ENCODE measurements at regions of chr10 and their contacts with region 1.

Region 1: DNA sequence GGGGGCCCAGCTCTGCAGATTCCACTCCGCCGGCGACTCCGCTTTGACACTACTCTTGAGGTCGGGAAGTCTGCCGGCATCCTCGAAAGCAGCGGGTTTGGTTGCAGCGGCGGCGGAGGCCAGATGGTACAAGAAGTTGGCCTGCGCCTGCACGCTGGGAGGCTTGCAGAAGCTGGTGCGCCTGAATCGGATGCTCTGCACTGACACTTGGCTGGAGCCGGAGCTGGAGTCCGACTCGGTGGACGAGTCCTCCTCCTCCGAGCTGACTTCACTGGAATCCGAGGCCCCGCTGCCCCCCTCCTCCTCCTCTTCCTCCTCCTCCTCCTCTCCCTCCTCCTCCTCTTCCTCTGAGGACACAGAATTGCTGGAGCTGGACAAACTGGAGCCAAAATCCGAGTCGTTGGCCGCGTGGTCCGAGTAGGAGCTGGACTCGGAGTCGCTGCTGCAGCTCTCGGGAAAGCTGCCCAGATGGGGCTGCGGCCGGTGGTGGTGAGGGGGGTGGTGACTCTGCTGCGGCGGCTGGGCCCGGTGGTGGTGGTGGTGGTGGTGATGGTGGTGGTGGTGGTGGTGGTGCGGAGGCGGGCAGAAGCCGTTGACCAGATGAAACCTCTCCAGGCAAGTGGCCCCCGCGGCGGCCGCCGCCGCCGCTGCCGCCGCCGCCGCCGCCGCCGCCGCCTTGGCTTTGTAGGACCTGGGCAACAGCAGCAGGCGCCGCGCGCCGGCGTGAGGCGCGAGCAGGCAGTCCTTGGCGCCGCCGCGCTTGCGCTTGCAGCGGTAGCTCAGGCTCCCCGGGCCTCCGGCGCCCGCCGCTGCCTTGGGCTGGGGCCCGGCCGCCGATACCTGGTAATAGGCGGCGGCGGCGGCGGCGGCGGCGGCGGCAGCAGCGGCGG is 9.0 kb downstream of the SKIDA1 start:
- DNase-seq: peak in 1 of 2 donors; percentile 89
- H3K4me3 ChIP-seq: peak overlapping the region; percentile 57 to 76
- H3K27ac ChIP-seq: peak overlapping the region; percentile 91
- H3K4me1 ChIP-seq: peaks cover 38% of the 10 kb centered on the region
- H3K27me3 ChIP-seq: no peaks in the 10 kb centered on the region
- CTCF ChIP-seq: no peak
- POLR2A ChIP-seq: no peak

Region 2: DNA sequence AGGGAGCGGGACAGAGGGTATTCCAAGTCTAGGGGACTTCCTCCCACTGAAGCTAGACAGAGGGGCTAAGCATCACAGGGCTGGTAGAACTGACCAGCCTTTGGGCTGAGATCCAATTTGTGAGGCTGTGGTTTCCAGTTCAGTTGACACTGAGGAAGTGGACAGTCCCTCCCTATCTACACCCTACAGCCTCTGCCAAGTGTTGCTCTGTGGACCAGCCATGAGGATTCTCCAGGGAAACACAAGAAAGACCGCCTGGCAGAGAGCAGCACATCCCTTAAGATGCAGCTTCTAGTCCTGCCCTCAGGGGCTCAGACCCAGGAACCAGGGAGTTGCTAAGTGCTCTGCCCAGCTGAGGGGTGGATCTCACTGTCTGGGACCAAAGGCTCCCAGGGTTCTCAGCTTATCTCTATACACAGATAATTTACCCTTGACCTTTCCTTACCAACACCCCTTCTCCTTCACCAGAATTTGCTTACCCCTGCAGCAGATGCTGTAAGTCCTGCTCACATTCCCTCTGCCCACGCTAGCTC is 243.0 kb before region 1 on chr10:
- intact Hi-C with region 1: no loop called
- DNase-seq: no peak
- H3K4me3 ChIP-seq: no peak overlapping the region
- H3K27ac ChIP-seq: no peak overlapping the region
- H3K4me1 ChIP-seq: no peaks in the 10 kb centered on the region
- H3K27me3 ChIP-seq: no peaks in the 10 kb centered on the region
- CTCF ChIP-seq: no peak
- POLR2A ChIP-seq: no peak

Region 3: DNA sequence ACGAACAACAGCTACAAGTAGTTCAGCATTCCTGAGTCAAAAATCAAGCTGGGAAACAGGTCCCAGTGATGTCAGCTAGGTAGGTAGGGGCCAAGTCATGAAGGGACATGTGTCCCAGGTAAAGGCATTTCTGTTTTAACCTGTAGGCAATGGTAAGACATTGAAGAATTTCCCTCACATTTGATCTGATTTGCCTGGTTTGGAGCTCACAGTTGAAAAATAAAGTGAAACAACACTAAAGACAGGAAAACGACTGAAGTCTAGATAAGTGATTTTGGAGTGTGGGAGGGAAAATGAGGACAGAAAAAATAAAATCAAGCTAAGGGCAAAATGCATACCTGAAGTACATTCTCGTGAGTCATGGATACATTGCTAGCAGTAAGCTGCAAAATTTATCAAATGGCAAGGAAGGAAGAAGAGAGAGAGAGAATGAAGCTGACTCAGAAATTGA is 160.9 kb before region 1 on chr10:
- intact Hi-C with region 1: no loop called
- DNase-seq: no peak
- H3K4me3 ChIP-seq: no peak overlapping the region
- H3K27ac ChIP-seq: no peak overlapping the region
- H3K4me1 ChIP-seq: peaks cover 3% of the 10 kb centered on the region
- H3K27me3 ChIP-seq: no peaks in the 10 kb centered on the region
- CTCF ChIP-seq: no peak
- POLR2A ChIP-seq: no peak

Region 4: GRCh38 chr10:21528236-21529031 is 11.9 kb after region 1 on chr10:
- intact Hi-C with region 1: loop called (anchors 1 kb)
- DNase-seq: no peak
- H3K4me3 ChIP-seq: peak overlapping the region; percentile 77 to 83
- H3K27ac ChIP-seq: peak overlapping the region; percentile 99
- H3K4me1 ChIP-seq: peaks cover 47% of the 10 kb centered on the region
- H3K27me3 ChIP-seq: no peaks in the 10 kb centered on the region
- CTCF ChIP-seq: no peak
- POLR2A ChIP-seq: no peak

Region 5: DNA sequence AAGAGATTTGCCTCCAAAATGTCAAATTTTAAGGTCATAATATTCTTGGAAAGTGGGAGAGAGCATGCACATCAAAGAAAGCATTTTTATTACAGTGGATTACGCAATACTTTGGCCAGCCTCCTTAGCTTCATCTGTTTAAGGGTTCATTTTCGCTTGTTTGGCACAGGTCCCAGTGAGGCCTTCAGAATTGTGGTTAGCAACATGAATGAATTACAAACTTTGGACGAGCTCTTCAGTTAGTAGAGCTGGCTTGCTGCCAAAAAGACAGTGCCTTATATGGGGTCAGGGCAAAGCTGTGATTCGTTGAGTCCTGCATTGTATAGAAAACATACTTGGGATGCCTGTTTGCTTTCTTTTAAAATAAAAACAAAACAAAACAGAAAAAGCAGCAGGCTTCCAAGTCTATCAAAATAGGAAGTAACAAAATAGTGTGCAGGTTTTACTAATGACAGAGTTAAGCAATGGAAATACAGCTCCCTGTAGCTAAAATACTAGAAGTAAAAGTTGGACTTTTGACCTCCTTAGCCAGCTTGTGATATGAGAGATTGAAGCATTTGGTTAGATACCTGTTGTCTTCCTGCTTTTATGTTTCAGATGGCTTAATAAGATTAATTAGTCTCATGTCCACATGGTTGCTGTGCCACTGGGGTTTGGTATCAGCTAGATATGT is 208.3 kb after region 1 on chr10:
- intact Hi-C with region 1: loop called (anchors 5 kb)
- DNase-seq: no peak
- H3K4me3 ChIP-seq: no peak overlapping the region
- H3K27ac ChIP-seq: no peak overlapping the region
- H3K4me1 ChIP-seq: peaks cover 30% of the 10 kb centered on the region
- H3K27me3 ChIP-seq: no peaks in the 10 kb centered on the region
- CTCF ChIP-seq: no peak
- POLR2A ChIP-seq: no peak

Region 6: GRCh38 chr10:22325272-22326144 is 809.0 kb after region 1 on chr10:
- intact Hi-C with region 1: loop called (anchors 5 kb)
- DNase-seq: peak in 1 of 2 donors; percentile 92
- H3K4me3 ChIP-seq: peak overlapping the region; percentile 50 to 67
- H3K27ac ChIP-seq: peak overlapping the region; percentile 77
- H3K4me1 ChIP-seq: peaks cover 41% of the 10 kb centered on the region
- H3K27me3 ChIP-seq: no peaks in the 10 kb centered on the region
- CTCF ChIP-seq: no peak
- POLR2A ChIP-seq: no peak

Measured in vagina (tissue), 2 donors.